ENCODE measurements at regions of chr6 and their contacts with region 1.

Region 1: DNA sequence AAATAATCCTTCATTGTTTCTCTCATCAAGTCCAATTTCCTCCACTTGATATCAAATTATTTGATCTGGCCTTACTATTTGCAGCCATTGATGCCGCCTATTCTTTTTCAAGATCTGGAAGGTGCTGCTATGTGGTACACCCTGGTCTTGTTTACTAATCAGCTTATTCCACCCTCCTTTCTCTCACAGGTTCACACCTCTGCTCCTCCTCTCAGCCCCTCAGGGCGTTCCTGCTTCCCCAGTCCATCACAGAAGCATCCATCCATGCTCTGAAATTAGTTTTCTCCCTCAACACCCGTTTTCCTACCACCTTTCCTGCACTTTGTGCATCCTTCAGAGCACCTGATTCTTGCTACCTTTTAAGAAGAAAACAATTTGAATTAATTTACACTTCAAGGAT is 183.6 kb downstream of the EPHA7 start:
- DNase-seq: no peak
- ATAC-seq: no peak
- H3K4me3 ChIP-seq: no peak overlapping the region
- H3K27ac ChIP-seq: no peak overlapping the region
- H3K4me1 ChIP-seq: no peaks in the 10 kb centered on the region
- H3K27me3 ChIP-seq: no peaks in the 10 kb centered on the region
- CTCF ChIP-seq: no peak

Region 2: DNA sequence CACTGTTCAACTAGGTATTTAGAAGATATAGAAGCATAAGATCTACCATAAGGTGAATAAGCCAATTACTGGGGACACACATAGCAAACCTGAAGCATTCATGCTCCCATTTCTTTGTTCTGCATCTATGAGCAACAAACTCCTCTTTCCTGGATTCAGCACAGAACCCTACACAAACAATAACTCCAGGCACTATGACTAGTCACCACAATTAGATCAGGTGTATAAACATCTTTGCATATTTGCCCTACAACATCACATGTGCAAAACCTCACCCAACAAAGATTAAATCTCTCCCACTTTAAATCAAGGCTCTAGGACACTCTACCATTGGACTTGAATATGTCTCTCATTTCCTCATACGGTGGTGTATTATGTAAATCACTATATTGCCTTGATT is 468.7 kb before region 1 on chr6:
- CTCF ChIA-PET with region 1: no interaction called
- POLR2A ChIA-PET with region 1: no interaction called
- in situ Hi-C with region 1: no loop called
- intact Hi-C with region 1: no loop called
- DNase-seq: no peak
- ATAC-seq: no peak
- H3K4me3 ChIP-seq: no peak overlapping the region
- H3K27ac ChIP-seq: no peak overlapping the region
- H3K4me1 ChIP-seq: no peaks in the 10 kb centered on the region
- H3K27me3 ChIP-seq: no peaks in the 10 kb centered on the region
- CTCF ChIP-seq: no peak

Region 3: DNA sequence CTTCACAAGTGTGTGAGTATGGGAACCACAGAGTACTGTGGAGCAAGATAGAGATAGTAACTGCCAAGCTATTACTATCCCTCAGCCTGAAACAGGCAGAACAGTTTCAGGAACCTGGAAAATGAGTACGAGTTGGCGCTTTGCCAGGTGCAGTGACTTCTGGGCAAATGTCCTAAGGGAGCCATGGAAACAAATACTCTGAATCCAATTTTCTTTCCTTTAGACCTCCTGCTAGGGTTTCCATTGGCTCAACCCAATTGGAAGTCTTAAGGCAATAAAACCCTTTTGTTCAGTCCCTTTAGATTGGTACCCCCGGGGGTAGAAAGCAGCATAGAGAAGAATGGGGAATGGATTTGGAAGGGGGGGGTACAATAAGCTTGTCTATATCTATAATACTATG is 388.6 kb after region 1 on chr6:
- CTCF ChIA-PET with region 1: no interaction called
- POLR2A ChIA-PET with region 1: interaction called, 11 read pairs
- in situ Hi-C with region 1: no loop called
- intact Hi-C with region 1: no loop called
- DNase-seq: no peak
- ATAC-seq: no peak
- H3K4me3 ChIP-seq: no peak overlapping the region
- H3K27ac ChIP-seq: no peak overlapping the region
- H3K4me1 ChIP-seq: no peaks in the 10 kb centered on the region
- H3K27me3 ChIP-seq: no peaks in the 10 kb centered on the region
- CTCF ChIP-seq: no peak